ENCODE measurements at regions of chr5 and their contacts with region 1.

Region 1: GRCh38 chr5:74953940-74954720 is 87.9 kb upstream of the FAM169A start:
- DNase-seq: peak; percentile 68 to 94
- H3K4me3 ChIP-seq: peak overlapping the region; percentile 32; the same call in 1 of the 2 replicates
- H3K27ac ChIP-seq: peak overlapping the region; percentile 87
- H3K4me1 ChIP-seq: peaks cover 32% of the 10 kb centered on the region
- H3K27me3 ChIP-seq: no peaks in the 10 kb centered on the region
- CTCF ChIP-seq: no peak

Region 2: DNA sequence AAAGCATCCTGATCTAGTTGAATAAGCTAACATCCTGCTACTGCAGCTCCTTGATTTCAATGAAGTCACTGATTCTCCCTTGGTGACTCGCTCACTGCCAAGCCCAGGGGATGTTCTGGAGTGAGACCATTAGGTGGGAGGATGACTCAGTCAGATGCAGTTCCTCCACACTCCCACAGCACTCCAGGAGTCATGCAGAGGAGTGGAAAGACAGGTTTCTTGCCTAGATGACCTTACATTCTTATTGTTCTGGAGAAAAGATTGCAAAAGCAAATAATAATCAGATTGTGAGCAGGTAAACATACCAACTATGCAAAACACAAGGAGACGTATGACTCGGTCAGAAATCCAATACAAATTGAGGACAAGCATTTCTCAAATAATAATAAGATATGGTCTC is 83.0 kb after region 1 on chr5:
- CTCF ChIA-PET with region 1: interaction called, 7 read pairs
- POLR2A ChIA-PET with region 1: no interaction called
- intact Hi-C with region 1: loop called (anchors 1 kb)
- DNase-seq: peak; percentile 85 to 99
- H3K4me3 ChIP-seq: no peak overlapping the region; the same call in 1 of the 2 replicates
- H3K27ac ChIP-seq: peak overlapping the region; percentile 88
- H3K4me1 ChIP-seq: peaks cover 48% of the 10 kb centered on the region
- H3K27me3 ChIP-seq: no peaks in the 10 kb centered on the region
- CTCF ChIP-seq: no peak